ENCODE measurements at regions of chr15 and their contacts with region 1.

Region 1: DNA sequence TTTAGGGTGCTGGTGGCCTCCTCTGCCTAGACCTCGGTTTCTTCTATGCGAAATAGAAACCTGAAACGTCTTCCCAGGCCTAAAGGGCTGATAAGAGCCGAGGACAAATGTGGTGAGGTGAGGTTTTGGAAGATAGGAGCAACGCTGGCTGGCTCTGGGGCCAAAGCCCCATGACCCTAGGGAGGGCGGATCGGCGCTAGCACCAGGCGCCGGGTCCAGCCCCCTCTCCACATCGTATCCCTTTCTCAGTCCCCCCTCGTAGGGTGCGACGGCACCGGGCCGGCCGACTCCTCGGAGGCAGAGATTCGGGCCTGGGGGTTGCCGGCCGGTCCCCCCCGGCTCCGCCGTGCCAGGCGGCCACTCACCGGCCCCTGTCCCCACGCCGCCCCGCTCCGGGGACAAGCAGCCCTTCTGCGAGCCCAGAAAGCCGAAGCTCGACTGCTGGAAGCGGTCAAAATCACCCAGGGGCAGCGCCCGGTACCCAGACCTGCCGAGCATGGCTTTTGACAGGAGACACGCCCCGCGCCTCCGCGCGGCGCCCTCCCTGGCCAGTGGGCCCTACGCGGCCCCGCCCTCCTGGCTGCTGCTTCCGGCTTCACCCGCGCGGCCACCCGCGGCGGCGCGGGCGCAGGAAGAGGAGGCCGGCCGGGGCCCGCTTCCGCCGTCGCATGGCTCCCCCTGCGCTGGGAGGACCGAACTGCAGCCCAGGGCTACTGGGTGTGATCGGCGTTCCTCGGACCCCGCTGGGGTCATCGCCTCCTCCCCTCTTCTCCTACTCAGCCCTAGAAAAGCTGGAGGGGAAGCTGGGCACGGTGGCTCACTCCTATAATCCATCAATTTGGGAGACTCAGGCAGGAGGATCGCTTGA is at the start of gene STOML1:
- DNase-seq: peak; percentile 96
- H3K4me3 Mint-ChIP-seq: peak within 1 kb of the TSS; percentile 89
- H3K27ac Mint-ChIP-seq: peak within 1 kb of the TSS; percentile 85
- H3K4me1 Mint-ChIP-seq: peaks cover 49% of the 10 kb centered on the region
- H3K27me3 Mint-ChIP-seq: no peaks in the 10 kb centered on the region
- total RNA-seq, gene STOML1: 10.6 and 11.6 TPM in 2 replicates

Region 2: DNA sequence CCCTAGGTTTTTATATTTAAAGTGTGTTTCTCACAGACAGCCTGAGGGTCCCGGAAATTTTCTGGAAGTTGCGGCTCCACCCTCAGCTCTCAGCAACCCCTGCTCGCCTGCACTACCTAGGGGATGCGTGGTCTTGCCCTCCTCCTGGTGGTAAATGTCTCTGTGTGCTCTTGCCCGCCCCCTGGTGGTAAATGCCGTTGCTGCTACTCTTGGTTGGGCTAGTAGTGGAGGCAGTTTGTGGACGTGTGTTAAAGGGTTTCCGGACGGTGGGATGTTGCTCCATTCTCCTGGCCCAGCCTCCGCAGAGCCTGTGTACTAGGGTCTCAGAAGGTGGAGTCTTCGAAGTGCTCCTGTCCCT is 27.2 kb before region 1 on chr15:
- intact Hi-C with region 1: loop called (anchors 2 kb)
- DNase-seq: peak; percentile 77
- H3K4me3 Mint-ChIP-seq: peak overlapping the region; percentile 73
- H3K27ac Mint-ChIP-seq: peak overlapping the region; percentile 87
- H3K4me1 Mint-ChIP-seq: peaks cover 37% of the 10 kb centered on the region
- H3K27me3 Mint-ChIP-seq: no peaks in the 10 kb centered on the region

Region 3: DNA sequence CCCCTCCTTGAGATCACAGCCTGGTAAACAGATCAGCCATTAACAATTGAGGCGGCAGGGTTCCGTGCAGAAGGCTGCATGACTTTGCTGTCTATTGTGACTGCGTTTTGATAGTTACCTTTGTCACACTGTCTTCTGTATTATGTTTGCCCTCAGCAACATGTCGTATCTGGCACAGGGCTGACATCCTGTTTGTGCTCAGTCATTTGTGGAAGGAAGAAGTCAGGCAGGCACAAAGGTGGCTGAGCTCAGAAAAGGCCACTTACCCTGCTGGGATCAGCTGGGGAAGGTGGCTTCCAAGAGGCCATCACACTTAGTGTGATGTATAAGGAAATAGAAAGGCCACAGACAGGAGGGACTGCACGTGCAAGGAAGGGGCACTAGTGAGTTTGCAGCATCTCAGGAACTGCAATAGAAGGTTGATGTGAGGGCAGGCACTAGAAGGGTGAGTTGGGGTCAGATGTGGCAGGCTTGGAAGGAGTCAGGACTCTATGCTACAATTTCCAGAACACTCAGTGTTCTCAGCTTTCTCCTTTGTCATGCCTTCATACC is 15.9 kb after region 1 on chr15:
- intact Hi-C with region 1: loop called (anchors 1 kb)
- DNase-seq: peak; percentile 30
- H3K4me3 Mint-ChIP-seq: peak overlapping the region; percentile 79
- H3K27ac Mint-ChIP-seq: peak overlapping the region; percentile 96
- H3K4me1 Mint-ChIP-seq: peaks cover 75% of the 10 kb centered on the region
- H3K27me3 Mint-ChIP-seq: no peaks in the 10 kb centered on the region

Region 4: DNA sequence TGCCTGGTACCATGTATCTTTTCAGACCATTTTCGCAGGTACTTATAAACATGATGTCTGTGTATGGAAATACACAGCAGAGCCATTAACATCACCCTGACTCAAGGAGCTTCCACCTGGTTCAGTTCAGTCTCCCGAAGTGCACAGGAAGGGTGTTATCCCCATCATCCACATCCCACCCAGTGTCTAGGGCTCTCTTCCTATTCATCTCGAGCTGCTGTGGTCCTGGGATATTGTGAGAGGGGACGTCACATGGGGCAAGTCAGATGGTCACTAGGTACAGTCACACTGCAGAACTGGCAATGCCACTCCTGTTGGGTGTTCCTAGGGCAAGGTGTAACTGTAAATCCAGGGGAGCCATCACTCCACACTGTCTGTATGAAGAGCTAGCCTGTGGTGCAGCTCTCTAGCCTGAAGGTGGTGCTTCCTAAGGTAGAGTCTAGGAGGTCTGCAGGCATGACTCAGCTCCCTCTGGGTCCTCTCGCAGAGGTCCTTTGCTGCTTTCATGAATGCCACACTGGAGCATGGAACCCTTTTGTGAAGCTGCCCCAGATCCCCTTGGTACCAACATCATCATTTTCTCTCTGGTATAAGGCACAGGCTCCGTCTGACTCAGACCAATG is 152.3 kb after region 1 on chr15:
- intact Hi-C with region 1: no loop called
- DNase-seq: no peak
- H3K4me3 Mint-ChIP-seq: no peak overlapping the region
- H3K27ac Mint-ChIP-seq: no peak overlapping the region
- H3K4me1 Mint-ChIP-seq: no peaks in the 10 kb centered on the region
- H3K27me3 Mint-ChIP-seq: peaks cover 33% of the 10 kb centered on the region

Region 5: GRCh38 chr15:74615508-74616365 is 623.8 kb after region 1 on chr15 and contains the start of gene CLK3:
- intact Hi-C with region 1: loop called (anchors 10 kb)
- DNase-seq: peak; percentile 94
- H3K4me3 Mint-ChIP-seq: peak within 1 kb of the TSS; percentile 93
- H3K27ac Mint-ChIP-seq: peak within 1 kb of the TSS; percentile 95
- H3K4me1 Mint-ChIP-seq: peaks cover 33% of the 10 kb centered on the region
- H3K27me3 Mint-ChIP-seq: peaks cover 5% of the 10 kb centered on the region
- total RNA-seq, gene CLK3: 103 and 107 TPM in 2 replicates

Region 6: DNA sequence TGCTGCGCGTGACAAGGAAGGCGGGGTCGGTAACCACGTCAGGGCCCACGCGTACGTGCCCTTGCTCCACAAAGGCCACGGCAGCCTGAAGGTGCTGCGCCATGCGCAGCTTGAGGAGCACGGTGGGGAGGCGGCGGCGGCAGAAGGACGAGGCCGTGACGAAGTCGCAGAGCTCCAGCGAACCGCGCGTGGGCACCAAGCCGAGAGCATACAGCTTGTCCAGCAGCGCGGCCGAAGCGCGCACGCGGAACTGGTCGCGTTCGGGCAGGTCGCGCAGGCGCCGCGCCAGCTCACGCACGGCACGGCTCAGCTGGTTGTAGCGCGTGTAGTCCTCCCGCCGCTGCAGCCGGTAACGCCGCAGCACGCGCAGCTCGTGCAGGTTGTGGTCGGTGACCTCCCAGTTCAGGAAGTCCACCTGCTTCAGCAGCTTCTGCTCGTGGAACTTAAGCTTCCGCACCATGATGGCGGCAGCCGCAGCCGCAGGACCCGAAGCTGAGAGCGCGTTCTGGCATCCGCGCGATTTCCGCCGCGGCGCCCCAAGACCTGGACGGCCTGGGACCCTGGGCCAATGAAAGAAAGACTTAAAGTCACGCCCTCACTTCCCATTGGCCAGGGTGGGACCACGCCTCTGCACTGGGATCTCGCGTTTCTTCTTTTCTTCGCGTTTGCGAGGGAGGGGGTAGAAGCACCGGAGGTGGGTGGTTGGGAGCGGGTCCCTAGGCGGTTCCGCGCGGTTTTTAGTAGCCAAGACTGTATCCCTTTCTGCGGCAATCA is 1647.9 kb after region 1 on chr15 and contains the start of gene IMP3:
- intact Hi-C with region 1: loop called (anchors 10 kb)
- DNase-seq: peak; percentile 93
- H3K4me3 Mint-ChIP-seq: peak within 1 kb of the TSS; percentile 90
- H3K27ac Mint-ChIP-seq: peak within 1 kb of the TSS; percentile 94
- H3K4me1 Mint-ChIP-seq: peaks cover 39% of the 10 kb centered on the region
- H3K27me3 Mint-ChIP-seq: peaks cover 6% of the 10 kb centered on the region
- total RNA-seq, gene IMP3: 110 and 113 TPM in 2 replicates